Activated naive CD4-positive, alpha-beta T cell treated with anti-CD3 and anti-CD28 coated beads, Interleukin-2, amount 10 ng/mL, durations not matched to agents 7 days and 5 days (primary cell): ENCODE measurements at regions of chr11 and their contacts with region 1.

Region 1: DNA sequence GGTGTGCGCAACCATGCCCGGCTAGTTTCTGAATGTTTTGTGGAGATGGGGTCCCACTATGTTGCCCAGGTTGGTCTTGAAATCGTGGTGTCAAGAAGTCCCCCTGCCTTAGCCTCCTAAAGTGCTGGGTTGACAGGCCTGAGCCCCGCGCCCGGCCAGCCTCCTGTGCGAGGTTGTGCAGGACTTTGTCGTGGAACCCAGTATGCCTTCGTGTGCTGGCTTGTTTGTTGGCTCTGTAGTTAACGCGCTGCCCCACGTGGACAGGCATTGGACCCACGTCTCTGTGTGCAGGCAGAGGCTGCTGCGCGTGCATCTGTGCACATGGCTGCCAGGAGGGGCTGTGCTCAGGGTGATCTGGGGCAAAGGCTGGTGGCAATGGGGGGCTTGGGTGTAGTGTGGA is 33.9 kb upstream of the ZNF195 start:
- DNase-seq: no peak
- H3K4me3 Mint-ChIP-seq: no peak overlapping the region
- H3K27ac Mint-ChIP-seq: no peak overlapping the region
- H3K4me1 Mint-ChIP-seq: no peaks in the 10 kb centered on the region
- H3K27me3 Mint-ChIP-seq: peaks cover 10% of the 10 kb centered on the region

Region 2: GRCh38 chr11:3341298-3341697 is 71.5 kb before region 1 on chr11:
- CTCF ChIA-PET with region 1: interaction called, 35 read pairs
- DNase-seq: peak; percentile 82
- H3K4me3 Mint-ChIP-seq: no peak overlapping the region
- H3K27ac Mint-ChIP-seq: no peak overlapping the region
- H3K4me1 Mint-ChIP-seq: no peaks in the 10 kb centered on the region
- H3K27me3 Mint-ChIP-seq: peaks cover 43% of the 10 kb centered on the region

Region 3: DNA sequence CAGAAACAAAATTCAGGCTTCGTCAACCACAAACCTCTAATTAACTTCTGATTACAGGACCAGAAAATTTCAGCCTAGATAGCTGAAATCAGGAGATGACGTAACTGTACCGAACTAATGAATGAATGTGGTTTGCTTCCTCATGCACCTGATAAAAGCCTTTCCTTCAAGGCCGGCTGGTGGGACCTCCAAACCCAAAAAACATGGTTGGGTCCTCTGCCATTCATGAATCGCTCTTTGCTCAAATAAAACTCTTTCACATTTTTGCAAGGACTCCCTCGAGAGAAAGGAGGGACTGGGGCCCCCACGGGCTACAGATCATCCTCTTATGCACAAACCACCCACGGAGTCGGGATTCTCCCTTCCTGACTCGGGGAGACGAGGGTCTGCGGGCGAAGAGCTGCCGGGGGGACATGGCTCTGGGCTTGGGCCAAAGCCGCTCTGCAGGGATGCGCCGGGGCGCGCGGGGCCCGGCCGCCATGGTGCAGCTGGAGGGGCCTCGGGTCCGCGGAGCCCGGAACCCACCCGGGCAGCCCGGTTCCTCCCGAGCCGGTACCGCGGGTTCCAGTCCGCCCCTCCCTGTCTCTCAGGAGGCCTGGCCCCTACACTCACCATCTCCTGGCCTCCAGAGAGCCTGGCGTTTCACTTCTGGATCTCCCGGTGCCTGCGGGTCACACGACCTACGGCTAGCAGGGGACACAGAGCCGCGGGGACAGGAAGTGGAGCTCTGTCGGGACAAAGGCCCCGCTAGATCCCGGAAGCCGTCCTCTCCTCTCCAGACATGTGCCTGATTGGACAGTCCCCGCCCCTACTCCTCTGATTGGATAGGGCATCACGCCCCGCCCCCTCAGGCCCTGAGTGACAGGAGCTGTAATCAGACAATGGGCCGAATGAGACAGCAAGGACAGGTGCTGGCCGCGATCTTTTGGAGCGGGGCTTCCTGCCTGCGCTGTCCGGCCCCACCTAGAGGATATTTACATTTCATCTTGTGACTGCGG is 34.1 kb before region 1 on chr11 and contains the start of gene ZNF195:
- CTCF ChIA-PET with region 1: interaction called, 15 read pairs
- DNase-seq: peak; percentile 99
- H3K4me3 Mint-ChIP-seq: peak within 1 kb of the TSS; percentile 92
- H3K27ac Mint-ChIP-seq: peak within 1 kb of the TSS; percentile 94
- H3K4me1 Mint-ChIP-seq: peaks cover 44% of the 10 kb centered on the region
- H3K27me3 Mint-ChIP-seq: peaks cover 2% of the 10 kb centered on the region